HEK293T (cell line): ENCODE measurements at regions of chr1 and their contacts with region 1.

Region 1: GRCh38 chr1:113886417-113887401 is 672 bp downstream of the BCL2L15 start:
- DNase-seq: no peak

Region 2: GRCh38 chr1:113871597-113872113 is 15.1 kb before region 1 on chr1 and contains the start of gene PTPN22:
- CTCF ChIA-PET with region 1: interaction called, 10 read pairs
- POLR2A ChIA-PET with region 1: no interaction called
- DNase-seq: no peak

Region 3: GRCh38 chr1:113898241-113898814 is 11.6 kb after region 1 on chr1:
- CTCF ChIA-PET with region 1: no interaction called
- POLR2A ChIA-PET with region 1: no interaction called
- DNase-seq: no peak